Heart left ventricle (tissue), 16 donors: ENCODE measurements at regions of chr2 and their contacts with region 1.

Region 1: GRCh38 chr2:178850369-178850768 is 43.1 kb upstream of the TTN start:
- DNase-seq: no peak
- ATAC-seq: no peak
- H3K4me3 ChIP-seq: no peak overlapping the region
- H3K27ac ChIP-seq: peak overlapping the region in 1 of 12 donors; percentile 5
- H3K4me1 ChIP-seq: peaks cover 0 to 25% (median 10%) of the 10 kb centered on the region in 12 donors
- H3K27me3 ChIP-seq: no peaks in the 10 kb centered on the region
- CTCF ChIP-seq: no peak
- POLR2A ChIP-seq: no peak

Region 2: GRCh38 chr2:178568227-178568626 is 282.1 kb before region 1 on chr2:
- intact Hi-C with region 1: no loop called
- DNase-seq: no peak
- ATAC-seq: no peak
- H3K4me3 ChIP-seq: no peak overlapping the region
- H3K27ac ChIP-seq: no peak overlapping the region
- H3K4me1 ChIP-seq: peaks cover 0 to 45% (median 3%) of the 10 kb centered on the region in 12 donors
- H3K27me3 ChIP-seq: no peaks in the 10 kb centered on the region
- CTCF ChIP-seq: no peak
- POLR2A ChIP-seq: no peak

Region 3: GRCh38 chr2:178819992-178820391 is 30.4 kb before region 1 on chr2:
- intact Hi-C with region 1: loop called in 1 of 10 experiments (anchors 5 kb)
- DNase-seq: peak in 2 of 5 donors; percentile 37 to 40
- ATAC-seq: peak; percentile 82 to 90 (median 87)
- H3K4me3 ChIP-seq: peak overlapping the region in 9 of 12 donors; percentile 5 to 30 (median 18)
- H3K27ac ChIP-seq: peak overlapping the region; percentile 56 to 84 (median 71)
- H3K4me1 ChIP-seq: peaks cover 0 to 17% (median 2%) of the 10 kb centered on the region in 12 donors
- H3K27me3 ChIP-seq: no peaks in the 10 kb centered on the region
- CTCF ChIP-seq: no peak
- POLR2A ChIP-seq: no peak

Region 4: GRCh38 chr2:178882666-178883440 is 32.5 kb after region 1 on chr2:
- intact Hi-C with region 1: no loop called
- DNase-seq: peak in 1 of 5 donors; percentile 27
- ATAC-seq: peak; percentile 55 to 84 (median 81)
- H3K4me3 ChIP-seq: no peak overlapping the region
- H3K27ac ChIP-seq: peak overlapping the region in 6 of 12 donors; percentile 3 to 52 (median 34)
- H3K4me1 ChIP-seq: peaks cover 0 to 30% (median 13%) of the 10 kb centered on the region in 12 donors
- H3K27me3 ChIP-seq: no peaks in the 10 kb centered on the region
- CTCF ChIP-seq: no peak
- POLR2A ChIP-seq: no peak

Region 5: DNA sequence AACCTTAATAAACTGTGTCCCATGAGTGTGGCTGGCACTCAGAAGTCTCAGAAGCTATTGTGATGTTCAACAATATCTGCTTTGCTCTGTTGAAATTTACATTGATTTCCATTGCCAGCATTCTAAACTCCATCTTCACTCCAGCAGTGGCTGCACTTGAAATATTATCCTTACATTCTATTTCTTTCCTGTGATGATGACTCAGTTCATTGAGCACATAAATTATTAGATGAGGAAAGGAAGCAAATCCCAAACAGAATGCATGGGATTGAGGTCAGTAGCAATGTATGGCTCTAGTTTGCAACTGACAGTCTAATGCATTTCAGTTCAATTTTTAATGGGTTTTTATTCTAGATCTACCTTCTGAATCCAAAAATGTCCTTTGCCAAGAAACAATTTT is 49.3 kb after region 1 on chr2:
- intact Hi-C with region 1: loop called in 1 of 10 experiments (anchors 5 kb)
- DNase-seq: no peak
- ATAC-seq: no peak
- H3K4me3 ChIP-seq: no peak overlapping the region
- H3K27ac ChIP-seq: no peak overlapping the region
- H3K4me1 ChIP-seq: peaks cover 0 to 26% (median 4%) of the 10 kb centered on the region in 12 donors
- H3K27me3 ChIP-seq: no peaks in the 10 kb centered on the region
- CTCF ChIP-seq: no peak
- POLR2A ChIP-seq: no peak